Astrocyte of the cerebellum (primary cell): ENCODE measurements at regions of chr10 and their contacts with region 1.

Region 1: DNA sequence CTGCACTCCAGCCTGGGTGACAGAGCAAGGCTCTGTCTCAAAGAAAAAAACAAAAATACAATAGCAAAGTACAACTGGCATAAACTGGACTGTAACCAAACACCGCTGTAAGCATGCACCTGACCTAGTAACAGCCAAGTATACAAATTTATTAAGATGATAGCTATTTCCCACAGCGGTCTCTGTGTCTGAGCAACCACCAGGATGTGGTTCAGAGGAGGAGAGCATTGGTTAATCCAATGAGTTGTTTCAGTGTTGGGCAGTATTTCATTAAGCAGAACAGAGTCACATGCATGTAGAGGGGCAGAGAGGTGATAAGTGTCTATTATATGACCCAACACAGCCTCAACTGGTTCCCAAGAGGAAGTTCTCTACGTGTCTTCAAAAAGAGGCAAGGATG is 4.0 kb downstream of the SLC16A12 start:
- DNase-seq: no peak
- H3K4me3 ChIP-seq: no peak overlapping the region
- CTCF ChIP-seq: no peak

Region 2: GRCh38 chr10:89478085-89478738 is 53.1 kb before region 1 on chr10:
- in situ Hi-C with region 1: loop called (anchors 5 kb)
- DNase-seq: peak; percentile 43
- H3K4me3 ChIP-seq: no peak overlapping the region
- CTCF ChIP-seq: peak; percentile 33

Region 3: GRCh38 chr10:89502556-89502955 is 28.8 kb before region 1 on chr10:
- in situ Hi-C with region 1: no loop called
- DNase-seq: no peak
- H3K4me3 ChIP-seq: no peak overlapping the region
- CTCF ChIP-seq: no peak